A673 (cell line): ENCODE measurements at regions of chr2 and their contacts with region 1.

Region 1: GRCh38 chr2:42810121-42810970 is 18.0 kb upstream of the HAAO start:
- DNase-seq: peak; percentile 96
- H3K4me3 ChIP-seq: peak overlapping the region; percentile 75
- H3K27ac ChIP-seq: peak overlapping the region; percentile 99
- H3K4me1 ChIP-seq: no peaks in the 10 kb centered on the region
- H3K27me3 ChIP-seq: no peaks in the 10 kb centered on the region
- CTCF ChIP-seq: no peak

Region 2: GRCh38 chr2:41116106-41116797 is 1694.1 kb before region 1 on chr2:
- CTCF ChIA-PET with region 1: no interaction called
- POLR2A ChIA-PET with region 1: no interaction called
- intact Hi-C with region 1: no loop called
- DNase-seq: no peak
- H3K4me3 ChIP-seq: no peak overlapping the region
- H3K27ac ChIP-seq: no peak overlapping the region
- H3K4me1 ChIP-seq: no peaks in the 10 kb centered on the region
- H3K27me3 ChIP-seq: no peaks in the 10 kb centered on the region
- CTCF ChIP-seq: no peak

Region 3: GRCh38 chr2:42494355-42495233 is 315.8 kb before region 1 on chr2:
- CTCF ChIA-PET with region 1: no interaction called
- POLR2A ChIA-PET with region 1: interaction called, 8 read pairs
- intact Hi-C with region 1: loop called (anchors 1 kb)
- DNase-seq: peak; percentile 83
- H3K4me3 ChIP-seq: peak overlapping the region; percentile 62
- H3K27ac ChIP-seq: no peak overlapping the region
- H3K4me1 ChIP-seq: no peaks in the 10 kb centered on the region
- H3K27me3 ChIP-seq: no peaks in the 10 kb centered on the region
- CTCF ChIP-seq: peak; percentile 95

Region 4: DNA sequence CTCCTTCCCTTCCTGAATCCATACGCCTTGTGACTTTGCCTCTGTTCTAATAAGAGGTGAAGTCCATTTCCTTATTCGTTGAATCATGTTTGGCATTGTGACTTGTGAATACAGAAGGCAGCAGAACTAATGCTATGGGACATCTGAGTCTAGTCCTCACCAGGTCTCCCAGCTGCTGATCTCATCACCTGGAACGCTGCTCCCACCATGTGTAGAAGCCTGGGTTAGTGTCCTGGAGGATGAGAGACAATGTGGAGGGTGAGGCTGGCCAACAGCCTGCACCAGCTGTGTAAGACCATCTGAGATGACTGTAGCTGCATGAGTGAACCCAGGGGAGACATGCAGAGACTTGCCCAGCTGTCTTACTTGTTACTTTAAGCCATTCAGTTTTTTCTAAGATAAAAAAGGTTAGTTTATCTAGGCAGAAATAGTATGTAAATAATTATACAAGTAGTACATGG is 14.5 kb before region 1 on chr2:
- CTCF ChIA-PET with region 1: no interaction called
- POLR2A ChIA-PET with region 1: no interaction called
- intact Hi-C with region 1: no loop called
- DNase-seq: peak; percentile 11
- H3K4me3 ChIP-seq: no peak overlapping the region
- H3K27ac ChIP-seq: peak overlapping the region; percentile 26
- H3K4me1 ChIP-seq: peaks cover 22% of the 10 kb centered on the region
- H3K27me3 ChIP-seq: no peaks in the 10 kb centered on the region
- CTCF ChIP-seq: no peak

Region 5: DNA sequence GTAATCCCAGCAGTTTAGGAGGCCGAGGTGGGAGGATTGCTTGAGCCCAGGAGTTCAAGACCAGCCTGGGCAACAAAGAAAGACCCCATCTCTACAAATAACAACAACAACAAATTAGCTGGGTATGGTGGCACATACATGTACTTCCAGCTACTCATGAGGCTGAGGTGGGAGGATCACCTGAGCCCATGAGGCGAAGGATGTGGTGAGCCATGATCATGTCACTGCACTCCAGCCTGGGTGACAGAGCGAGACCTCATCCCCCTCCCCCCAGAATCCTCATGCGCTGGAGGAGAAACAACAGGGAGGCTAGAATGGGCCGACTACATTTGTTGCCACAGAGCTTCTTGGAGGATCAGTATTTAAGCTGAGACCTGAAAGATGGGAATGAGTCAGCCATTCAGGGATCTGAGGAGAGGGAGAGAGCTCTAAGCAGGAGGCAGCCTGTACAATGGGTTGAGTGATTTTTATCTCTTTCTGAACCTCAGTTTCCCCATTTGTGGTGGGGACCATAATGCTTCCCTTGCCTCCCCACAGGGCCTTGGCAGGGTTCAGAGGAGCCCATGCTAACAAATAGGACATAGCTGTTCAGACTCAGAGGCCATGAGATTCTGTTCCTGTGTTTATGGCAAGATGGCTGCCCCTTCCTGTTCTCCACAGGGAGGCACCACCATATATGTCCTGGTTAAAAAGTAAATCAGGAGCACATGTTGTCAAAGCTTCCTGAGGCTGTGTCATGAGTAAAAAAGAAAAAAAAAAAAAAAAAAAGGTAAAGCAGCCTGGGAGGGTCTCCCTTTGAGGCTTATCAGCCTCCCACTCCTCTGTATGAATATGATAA is 113.5 kb after region 1 on chr2:
- CTCF ChIA-PET with region 1: interaction called, 13 read pairs
- POLR2A ChIA-PET with region 1: no interaction called
- intact Hi-C with region 1: no loop called
- DNase-seq: peak; percentile 57
- H3K4me3 ChIP-seq: no peak overlapping the region
- H3K27ac ChIP-seq: peak overlapping the region; percentile 86
- H3K4me1 ChIP-seq: peaks cover 28% of the 10 kb centered on the region
- H3K27me3 ChIP-seq: no peaks in the 10 kb centered on the region
- CTCF ChIP-seq: no peak

Region 6: GRCh38 chr2:43819491-43820163 is 1009.3 kb after region 1 on chr2:
- CTCF ChIA-PET with region 1: no interaction called
- POLR2A ChIA-PET with region 1: no interaction called
- intact Hi-C with region 1: no loop called
- DNase-seq: no peak
- H3K4me3 ChIP-seq: no peak overlapping the region
- H3K27ac ChIP-seq: no peak overlapping the region
- H3K4me1 ChIP-seq: no peaks in the 10 kb centered on the region
- H3K27me3 ChIP-seq: no peaks in the 10 kb centered on the region
- CTCF ChIP-seq: no peak